Heart left ventricle (tissue), 16 donors: ENCODE measurements at regions of chr5 and their contacts with region 1.

Region 1: DNA sequence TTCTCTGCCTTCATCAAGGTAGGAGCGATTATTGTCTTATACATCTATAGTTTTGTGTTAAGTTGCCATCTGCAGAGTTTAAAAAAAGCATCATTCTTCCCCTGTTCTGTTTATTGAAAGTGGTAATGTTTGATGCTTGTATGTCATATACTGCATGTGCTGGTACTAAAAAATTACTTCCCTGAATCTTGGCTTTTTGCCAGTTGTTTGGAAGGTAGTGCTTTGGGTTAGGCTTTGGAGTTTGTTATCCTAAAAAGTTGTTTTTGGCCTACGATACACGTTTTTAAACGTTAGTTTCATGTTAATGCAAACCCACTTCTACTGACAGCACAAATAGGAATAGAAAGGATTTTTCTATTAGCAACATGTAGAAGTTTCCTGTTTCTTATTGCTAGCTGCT is 158.3 kb downstream of the GIN1 start:
- DNase-seq: no peak
- ATAC-seq: no peak
- H3K4me3 ChIP-seq: no peak overlapping the region
- H3K27ac ChIP-seq: no peak overlapping the region
- H3K4me1 ChIP-seq: peaks cover 0 to 18% (median 11%) of the 10 kb centered on the region in 12 donors
- H3K27me3 ChIP-seq: no peaks in the 10 kb centered on the region
- CTCF ChIP-seq: no peak
- POLR2A ChIP-seq: no peak

Region 2: GRCh38 chr5:101647861-101648260 is 1313.8 kb before region 1 on chr5:
- intact Hi-C with region 1: no loop called
- DNase-seq: no peak
- ATAC-seq: no peak
- H3K4me3 ChIP-seq: no peak overlapping the region
- H3K27ac ChIP-seq: no peak overlapping the region
- H3K4me1 ChIP-seq: no peaks in the 10 kb centered on the region
- H3K27me3 ChIP-seq: no peaks in the 10 kb centered on the region
- CTCF ChIP-seq: no peak
- POLR2A ChIP-seq: no peak

Region 3: GRCh38 chr5:103021314-103021713 is 59.6 kb after region 1 on chr5:
- intact Hi-C with region 1: loop called in 1 of 10 experiments (anchors 10 kb)
- DNase-seq: no peak
- ATAC-seq: no peak
- H3K4me3 ChIP-seq: no peak overlapping the region
- H3K27ac ChIP-seq: no peak overlapping the region
- H3K4me1 ChIP-seq: no peaks in the 10 kb centered on the region
- H3K27me3 ChIP-seq: no peaks in the 10 kb centered on the region
- CTCF ChIP-seq: no peak
- POLR2A ChIP-seq: no peak